IMR-90 (cell line): ENCODE measurements at regions of chr7 and their contacts with region 1.

Region 1: DNA sequence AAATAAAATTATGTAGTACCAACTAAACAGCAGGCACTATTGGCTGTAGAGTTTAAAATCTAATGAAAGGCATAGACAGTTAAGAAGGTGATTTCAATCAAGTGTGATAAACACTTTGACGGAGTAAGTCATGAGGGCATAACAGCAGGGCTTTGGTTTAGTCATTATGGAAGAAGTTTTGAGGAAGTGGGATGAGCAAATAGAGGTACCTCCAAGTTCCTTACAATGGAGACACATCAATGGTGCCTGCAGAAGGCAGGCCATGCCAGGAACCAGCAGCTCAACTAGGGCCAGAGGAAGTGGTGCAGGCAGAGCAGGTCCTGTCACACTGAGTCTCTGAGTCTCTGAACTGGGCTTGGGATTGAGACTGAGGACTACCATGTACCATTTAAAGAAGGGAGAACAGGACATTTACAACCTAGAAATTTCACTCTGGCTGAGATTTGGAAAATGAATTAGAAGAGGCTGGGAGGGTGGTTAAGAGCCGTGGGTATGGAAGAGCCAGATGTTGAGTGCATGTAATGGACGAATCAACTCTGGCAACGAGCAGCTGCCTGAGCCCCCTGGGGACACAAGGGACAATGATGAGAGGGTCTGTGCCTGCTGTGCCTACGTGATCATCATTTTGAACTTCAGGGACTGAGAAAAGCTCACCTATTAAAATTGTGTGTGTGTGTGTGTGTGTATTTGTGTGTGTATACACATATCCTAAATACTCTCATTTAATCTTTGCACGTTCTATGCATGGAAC is 208.7 kb upstream of the POM121L12 start:
- DNase-seq: no peak
- ATAC-seq: no peak
- H3K4me3 ChIP-seq: no peak overlapping the region
- H3K27ac ChIP-seq: no peak overlapping the region
- H3K4me1 ChIP-seq: no peaks in the 10 kb centered on the region
- H3K27me3 ChIP-seq: no peaks in the 10 kb centered on the region
- CTCF ChIP-seq: no peak
- POLR2A ChIP-seq: no peak
- RAD21 ChIP-seq: no peak

Region 2: DNA sequence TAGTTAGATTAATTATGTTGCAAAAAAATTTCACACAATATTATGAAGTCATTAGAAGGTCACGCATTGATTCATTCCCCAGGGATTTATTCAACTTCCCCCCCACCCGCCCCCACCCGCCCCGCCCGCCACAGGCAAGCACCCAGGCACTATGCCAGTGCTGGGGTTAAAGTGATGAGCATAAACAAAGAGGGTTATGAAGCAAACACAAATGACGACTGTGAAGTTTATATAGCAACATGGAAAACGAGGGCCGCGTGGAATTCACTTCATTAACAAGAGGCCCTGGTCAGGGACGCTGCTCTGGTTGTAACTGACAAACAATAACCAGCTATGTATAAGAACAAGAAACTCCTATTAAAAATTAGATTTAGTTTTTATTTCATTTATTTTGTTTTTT is 853.6 kb before region 1 on chr7:
- CTCF ChIA-PET with region 1: no interaction called
- POLR2A ChIA-PET with region 1: no interaction called
- dilution Hi-C with region 1: no loop called
- in situ Hi-C with region 1: no loop called
- intact Hi-C with region 1: no loop called
- DNase-seq: no peak
- ATAC-seq: no peak
- H3K4me3 ChIP-seq: no peak overlapping the region
- H3K27ac ChIP-seq: no peak overlapping the region
- H3K4me1 ChIP-seq: no peaks in the 10 kb centered on the region
- H3K27me3 ChIP-seq: no peaks in the 10 kb centered on the region
- CTCF ChIP-seq: no peak
- POLR2A ChIP-seq: no peak
- RAD21 ChIP-seq: no peak

Region 3: GRCh38 chr7:52764492-52765169 is 62.1 kb before region 1 on chr7:
- CTCF ChIA-PET with region 1: no interaction called
- POLR2A ChIA-PET with region 1: no interaction called
- dilution Hi-C with region 1: no loop called
- in situ Hi-C with region 1: no loop called
- intact Hi-C with region 1: no loop called
- DNase-seq: no peak
- ATAC-seq: no peak
- H3K4me3 ChIP-seq: no peak overlapping the region
- H3K27ac ChIP-seq: no peak overlapping the region
- H3K4me1 ChIP-seq: no peaks in the 10 kb centered on the region
- H3K27me3 ChIP-seq: no peaks in the 10 kb centered on the region
- CTCF ChIP-seq: no peak
- POLR2A ChIP-seq: no peak
- RAD21 ChIP-seq: no peak

Region 4: DNA sequence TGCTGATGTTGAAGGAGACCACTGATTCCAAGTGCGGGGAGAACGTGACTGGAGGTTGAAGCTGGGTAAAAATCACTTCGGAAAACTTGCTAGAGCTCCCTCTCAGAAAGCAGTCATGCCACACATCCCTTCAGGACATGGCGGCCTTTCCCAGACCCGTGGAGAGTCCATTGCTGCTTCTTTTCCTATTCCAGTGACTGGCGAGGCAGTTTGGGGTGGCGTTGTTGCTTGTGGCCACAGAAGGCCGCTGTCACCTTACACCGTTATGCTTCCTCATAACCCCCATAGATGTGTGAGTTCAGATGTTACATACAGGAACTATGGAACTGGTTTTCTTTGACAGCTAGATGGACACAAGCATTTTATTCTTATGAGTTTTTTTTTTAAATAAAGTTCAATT is 26.9 kb before region 1 on chr7:
- CTCF ChIA-PET with region 1: no interaction called
- POLR2A ChIA-PET with region 1: no interaction called
- dilution Hi-C with region 1: no loop called
- in situ Hi-C with region 1: no loop called
- intact Hi-C with region 1: loop called (anchors 1 kb)
- DNase-seq: no peak
- ATAC-seq: no peak
- H3K4me3 ChIP-seq: no peak overlapping the region
- H3K27ac ChIP-seq: no peak overlapping the region
- H3K4me1 ChIP-seq: no peaks in the 10 kb centered on the region
- H3K27me3 ChIP-seq: no peaks in the 10 kb centered on the region
- CTCF ChIP-seq: no peak
- POLR2A ChIP-seq: no peak
- RAD21 ChIP-seq: no peak

Region 5: GRCh38 chr7:52928591-52928990 is 101.9 kb after region 1 on chr7:
- CTCF ChIA-PET with region 1: no interaction called
- POLR2A ChIA-PET with region 1: no interaction called
- dilution Hi-C with region 1: no loop called
- in situ Hi-C with region 1: no loop called
- intact Hi-C with region 1: no loop called
- DNase-seq: no peak
- ATAC-seq: no peak
- H3K4me3 ChIP-seq: no peak overlapping the region
- H3K27ac ChIP-seq: no peak overlapping the region
- H3K4me1 ChIP-seq: no peaks in the 10 kb centered on the region
- H3K27me3 ChIP-seq: no peaks in the 10 kb centered on the region
- CTCF ChIP-seq: no peak
- POLR2A ChIP-seq: no peak
- RAD21 ChIP-seq: no peak